Activated T-helper 1 cell treated with anti-CD3 and anti-CD28 coated beads, Interleukin-12 subunit alpha, Interleukin-12 subunit beta, Interleukin-2, Interleukin-4 antibody, amounts not matched to agents 30 ng/mL and 10 ng/mL and 1 ng/mL, durations not matched to agents 14 hours and 24 hours and 36 hours (primary cell): ENCODE measurements at regions of chr2 and their contacts with region 1.

Region 1: GRCh38 chr2:64036034-64036705 is 16.9 kb upstream of the VPS54 start:
- DNase-seq: peak; percentile 36
- H3K4me3 Mint-ChIP-seq: peak overlapping the region; percentile 51
- H3K27ac Mint-ChIP-seq: peak overlapping the region; percentile 89
- H3K4me1 Mint-ChIP-seq: peaks cover 55% of the 10 kb centered on the region
- H3K27me3 Mint-ChIP-seq: no peaks in the 10 kb centered on the region

Region 2: GRCh38 chr2:63977904-63978303 is 58.3 kb before region 1 on chr2:
- intact Hi-C with region 1: loop called (anchors 5 kb)
- DNase-seq: peak; percentile 23
- H3K4me3 Mint-ChIP-seq: peak overlapping the region; percentile 37
- H3K27ac Mint-ChIP-seq: peak overlapping the region; percentile 77
- H3K4me1 Mint-ChIP-seq: peaks cover 13% of the 10 kb centered on the region
- H3K27me3 Mint-ChIP-seq: no peaks in the 10 kb centered on the region

Region 3: GRCh38 chr2:64052468-64053241 is 16.5 kb after region 1 on chr2:
- intact Hi-C with region 1: loop called (anchors 1 kb)
- DNase-seq: no peak
- H3K4me3 Mint-ChIP-seq: no peak overlapping the region
- H3K27ac Mint-ChIP-seq: no peak overlapping the region
- H3K4me1 Mint-ChIP-seq: peaks cover 40% of the 10 kb centered on the region
- H3K27me3 Mint-ChIP-seq: no peaks in the 10 kb centered on the region

Region 4: GRCh38 chr2:64133828-64134227 is 97.7 kb after region 1 on chr2:
- intact Hi-C with region 1: loop called (anchors 1 kb)
- DNase-seq: no peak
- H3K4me3 Mint-ChIP-seq: peak overlapping the region; percentile 39
- H3K27ac Mint-ChIP-seq: peak overlapping the region; percentile 88
- H3K4me1 Mint-ChIP-seq: peaks cover 90% of the 10 kb centered on the region
- H3K27me3 Mint-ChIP-seq: no peaks in the 10 kb centered on the region

Region 5: DNA sequence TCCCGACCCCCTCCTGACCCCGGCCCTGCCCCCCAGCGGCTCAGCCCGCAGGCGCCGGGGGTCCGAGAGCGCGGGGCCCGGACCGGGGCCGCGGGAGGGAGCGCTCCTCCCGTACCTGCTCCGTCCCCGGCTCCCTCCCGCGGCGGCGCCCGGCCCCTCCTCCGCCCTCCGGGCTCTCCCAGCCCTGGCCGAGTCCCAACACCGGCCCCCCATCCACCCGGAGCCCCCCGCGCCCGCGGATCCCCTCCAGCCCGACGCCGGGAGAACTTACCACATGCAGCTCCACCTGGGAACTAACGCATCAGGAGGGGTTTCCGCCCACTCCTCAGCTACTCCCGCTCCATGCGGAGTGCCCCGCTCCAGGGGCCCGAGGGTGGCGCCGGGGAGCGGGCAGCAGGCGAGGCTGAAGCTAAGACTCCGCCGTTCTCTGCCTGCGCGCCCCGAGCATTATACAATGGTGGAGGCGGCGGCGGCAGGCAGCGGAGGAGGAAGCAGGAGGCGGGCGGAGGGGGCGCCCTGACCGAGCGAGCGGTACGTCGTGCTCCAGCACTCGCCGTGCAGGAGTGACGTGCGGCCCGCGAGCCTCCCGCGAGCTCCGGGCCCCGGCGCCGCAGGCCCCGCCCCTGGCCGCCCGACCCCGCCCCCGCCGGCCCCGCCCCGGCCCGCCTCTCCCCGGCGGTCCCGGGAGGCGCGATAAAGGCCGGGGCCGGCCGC is 617.3 kb after region 1 on chr2 and contains the start of gene SERTAD2:
- intact Hi-C with region 1: loop called (anchors 10 kb)
- DNase-seq: peak; percentile 83
- H3K4me3 Mint-ChIP-seq: peak within 1 kb of the TSS; percentile 90
- H3K27ac Mint-ChIP-seq: peak within 1 kb of the TSS; percentile 90
- H3K4me1 Mint-ChIP-seq: peaks cover 71% of the 10 kb centered on the region
- H3K27me3 Mint-ChIP-seq: no peaks in the 10 kb centered on the region
- total RNA-seq, gene SERTAD2: 27.3 and 28.5 TPM in 2 replicates

Region 6: DNA sequence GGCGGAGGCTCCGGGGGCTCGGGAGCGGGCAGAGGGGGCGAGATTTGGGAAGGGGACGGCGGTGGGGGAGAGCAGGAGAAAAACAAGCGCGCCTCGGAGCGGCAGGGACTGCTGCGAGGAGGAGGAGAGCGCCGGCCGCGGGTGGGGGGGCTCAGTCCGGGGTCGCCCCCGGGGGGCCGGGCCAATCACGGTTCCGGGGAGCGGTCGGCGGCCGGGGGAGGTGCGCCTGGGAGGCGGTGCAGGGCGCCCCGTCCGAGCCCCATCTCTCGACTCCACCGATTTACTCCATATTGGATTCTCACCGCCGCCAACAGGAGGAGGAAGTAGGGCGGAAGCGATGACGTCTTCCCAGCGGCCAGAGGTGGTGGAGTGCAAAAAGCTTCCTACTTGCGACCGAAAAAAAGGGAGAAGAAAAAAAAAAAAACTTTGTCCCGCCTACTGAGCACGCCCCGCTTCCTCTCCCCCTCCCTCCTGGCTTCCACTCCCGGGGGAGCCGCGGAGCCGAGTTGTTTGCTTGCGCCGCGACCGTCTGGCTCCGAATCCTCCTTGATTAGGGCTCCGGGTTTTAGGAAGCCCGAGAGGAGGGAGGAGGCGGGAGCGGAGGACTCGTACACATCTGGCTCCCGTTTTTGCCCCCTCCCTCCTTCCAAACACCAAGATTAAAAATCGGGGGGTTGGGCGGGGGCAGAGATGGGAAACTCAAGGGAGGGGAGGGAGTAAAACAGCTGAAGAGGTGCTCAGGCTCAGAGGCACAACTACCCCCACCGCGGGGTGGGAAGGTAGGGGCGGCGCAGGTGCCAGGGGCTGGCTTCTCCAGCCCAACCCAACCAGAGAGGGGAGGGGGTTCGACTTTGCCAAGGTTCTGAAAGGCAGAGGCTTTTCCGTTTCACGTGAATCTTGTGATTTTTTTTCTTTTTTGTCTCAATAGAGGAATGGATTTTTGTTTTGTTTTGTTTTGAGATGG is 1396.3 kb after region 1 on chr2 and contains the start of gene SPRED2:
- intact Hi-C with region 1: loop called (anchors 10 kb)
- DNase-seq: peak; percentile 71
- H3K4me3 Mint-ChIP-seq: peak within 1 kb of the TSS; percentile 95
- H3K27ac Mint-ChIP-seq: peak within 1 kb of the TSS; percentile 92
- H3K4me1 Mint-ChIP-seq: peaks cover 24% of the 10 kb centered on the region
- H3K27me3 Mint-ChIP-seq: peaks cover 37% of the 10 kb centered on the region
- total RNA-seq, gene SPRED2: 8.5 and 9.4 TPM in 2 replicates